Heart right ventricle (tissue), 16 donors: ENCODE measurements at regions of chr1 and their contacts with region 1.

Region 1: GRCh38 chr1:12619792-12620487 is 1.9 kb upstream of the DHRS3 start:
- DNase-seq: peak; percentile 87 to 90
- ATAC-seq: peak; percentile 48 to 75 (median 61)
- H3K4me3 ChIP-seq: peak overlapping the region in 9 of 10 donors; percentile 55 to 91 (median 80)
- H3K27ac ChIP-seq: peak overlapping the region; percentile 92 to 98 (median 96)
- H3K4me1 ChIP-seq: peaks cover 9 to 65% (median 58%) of the 10 kb centered on the region in 9 donors
- H3K27me3 ChIP-seq: peaks cover 0 to 9% (median 0%) of the 10 kb centered on the region in 7 donors
- CTCF ChIP-seq: peak; percentile 94 to 97 (median 96)

Region 2: DNA sequence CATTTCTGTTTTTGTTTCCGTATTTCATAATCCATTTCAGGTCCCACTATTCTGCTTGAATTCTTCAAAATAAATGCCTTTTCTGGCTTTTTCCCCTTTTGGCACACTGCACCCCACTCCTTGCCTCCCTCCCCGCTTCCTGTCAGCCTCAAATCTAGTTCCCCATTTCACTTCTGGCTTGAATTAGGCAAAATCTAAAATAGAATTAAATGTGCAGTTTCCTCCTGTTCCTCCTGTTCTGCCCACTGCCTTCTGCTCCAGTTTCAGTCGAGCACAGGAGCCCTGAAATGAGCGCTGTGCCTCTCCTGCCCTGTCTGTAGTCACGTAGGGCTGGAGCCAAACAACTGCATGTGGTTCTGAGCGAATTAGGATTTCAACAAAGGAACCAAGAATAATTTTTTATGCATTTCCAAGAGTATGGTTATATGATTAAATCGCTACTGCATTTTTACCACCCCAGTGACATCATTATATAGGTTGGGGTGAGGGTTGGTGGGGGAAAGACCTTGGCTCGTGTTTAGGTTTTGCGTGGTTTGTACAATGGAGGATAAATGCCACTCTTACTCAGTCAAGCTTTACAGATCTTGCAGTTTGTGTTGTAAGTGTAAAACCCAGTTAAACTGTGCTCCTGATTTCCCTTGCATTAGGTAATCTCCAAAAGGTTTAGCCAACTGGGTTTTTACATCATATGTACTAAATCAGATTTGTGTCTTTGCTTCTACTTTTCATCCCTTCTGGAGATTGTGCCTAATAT is 275.2 kb before region 1 on chr1:
- intact Hi-C with region 1: loop called in 3 of 10 experiments (anchors 5 to 10 kb)
- DNase-seq: peak in 1 of 2 donors; percentile 37
- ATAC-seq: peak; percentile 39 to 64 (median 54)
- H3K4me3 ChIP-seq: peak overlapping the region in 9 of 10 donors; percentile 8 to 44 (median 35)
- H3K27ac ChIP-seq: peak overlapping the region in 9 of 10 donors; percentile 23 to 86 (median 76)
- H3K4me1 ChIP-seq: peaks cover 2 to 94% (median 79%) of the 10 kb centered on the region in 9 donors
- H3K27me3 ChIP-seq: no peaks in the 10 kb centered on the region
- CTCF ChIP-seq: no peak

Region 3: GRCh38 chr1:12454406-12455391 is 165.2 kb before region 1 on chr1:
- intact Hi-C with region 1: loop called in 2 of 10 experiments (anchors 5 kb)
- DNase-seq: no peak
- ATAC-seq: peak; percentile 8 to 41 (median 28)
- H3K4me3 ChIP-seq: no peak overlapping the region
- H3K27ac ChIP-seq: peak overlapping the region; percentile 31 to 91 (median 74)
- H3K4me1 ChIP-seq: peaks cover 35 to 98% (median 90%) of the 10 kb centered on the region in 9 donors
- H3K27me3 ChIP-seq: no peaks in the 10 kb centered on the region
- CTCF ChIP-seq: no peak

Region 4: DNA sequence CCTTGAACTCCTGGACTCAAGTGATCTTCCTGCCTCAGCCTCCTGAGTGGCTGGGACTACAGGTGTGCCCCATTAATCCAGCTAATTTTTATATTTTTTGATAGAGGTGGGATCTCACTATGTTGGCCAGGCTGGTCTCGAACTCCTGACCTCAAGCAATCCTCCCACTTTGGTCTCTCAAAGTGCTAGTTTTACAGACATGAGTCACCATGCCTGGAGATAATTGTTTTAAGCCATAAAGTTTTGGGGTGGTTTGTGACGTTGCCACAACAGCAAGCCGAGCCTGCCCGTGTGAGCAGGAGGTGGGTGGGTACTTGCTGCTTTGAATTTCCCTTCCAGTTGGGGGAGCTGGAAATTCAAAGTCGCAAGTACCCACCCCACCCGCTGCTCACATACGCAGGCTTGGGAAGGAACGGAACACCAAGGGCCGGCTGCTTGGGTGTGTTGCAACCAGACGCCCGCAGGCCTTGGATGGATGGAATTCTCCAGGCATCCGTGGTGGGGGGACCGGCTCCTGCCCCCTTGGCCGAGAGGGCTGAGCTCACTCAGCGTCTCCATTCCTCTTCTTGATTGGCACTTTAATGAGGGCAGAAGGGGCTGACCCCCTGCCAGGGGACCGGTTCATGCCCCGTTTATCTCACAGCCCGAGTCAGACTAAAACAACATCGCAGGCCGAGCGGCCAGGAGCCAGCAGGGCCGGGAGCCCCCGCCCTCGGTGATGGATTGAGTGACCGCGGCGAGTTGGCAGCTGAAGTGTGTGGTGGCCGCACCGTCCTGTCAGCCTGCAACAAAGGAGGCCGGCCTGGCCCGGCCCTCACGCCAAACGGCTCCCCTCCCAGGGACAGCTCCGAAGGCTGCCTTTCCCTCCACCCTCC is 80.0 kb before region 1 on chr1:
- intact Hi-C with region 1: loop called in 3 of 10 experiments (anchors 5 kb)
- DNase-seq: peak; percentile 58 to 82
- ATAC-seq: peak; percentile 68 to 87 (median 84)
- H3K4me3 ChIP-seq: peak overlapping the region in 5 of 10 donors; percentile 1 to 37 (median 21)
- H3K27ac ChIP-seq: peak overlapping the region; percentile 11 to 73 (median 48)
- H3K4me1 ChIP-seq: peaks cover 2 to 42% (median 26%) of the 10 kb centered on the region in 9 donors
- H3K27me3 ChIP-seq: no peaks in the 10 kb centered on the region
- CTCF ChIP-seq: peak in 1 of 9 donors; percentile 8

Region 5: GRCh38 chr1:12604114-12604874 is 15.6 kb before region 1 on chr1:
- intact Hi-C with region 1: loop called in 3 of 10 experiments (anchors 2 kb)
- DNase-seq: peak; percentile 42 to 74
- ATAC-seq: peak; percentile 78 to 93 (median 86)
- H3K4me3 ChIP-seq: peak overlapping the region in 1 of 10 donors; percentile 12
- H3K27ac ChIP-seq: peak overlapping the region; percentile 53 to 95 (median 78)
- H3K4me1 ChIP-seq: peaks cover 49 to 75% (median 68%) of the 10 kb centered on the region in 9 donors
- H3K27me3 ChIP-seq: no peaks in the 10 kb centered on the region
- CTCF ChIP-seq: no peak